Calu3 (cell line): ENCODE measurements at regions of chr18 and their contacts with region 1.

Region 1: GRCh38 chr18:35005963-35006577 is 35.1 kb upstream of the MAPRE2 start:
- DNase-seq: peak; percentile 36
- H3K4me3 Mint-ChIP-seq: no peak overlapping the region
- H3K27ac Mint-ChIP-seq: no peak overlapping the region
- H3K4me1 Mint-ChIP-seq: peaks cover 29% of the 10 kb centered on the region
- H3K27me3 Mint-ChIP-seq: no peaks in the 10 kb centered on the region
- CTCF ChIP-seq: peak; percentile 52

Region 2: GRCh38 chr18:34880882-34881834 is 124.9 kb before region 1 on chr18:
- CTCF ChIA-PET with region 1: no interaction called
- intact Hi-C with region 1: loop called (anchors 1 kb)
- DNase-seq: no peak
- H3K4me3 Mint-ChIP-seq: no peak overlapping the region
- H3K27ac Mint-ChIP-seq: no peak overlapping the region
- H3K4me1 Mint-ChIP-seq: no peaks in the 10 kb centered on the region
- H3K27me3 Mint-ChIP-seq: no peaks in the 10 kb centered on the region
- CTCF ChIP-seq: no peak

Region 3: DNA sequence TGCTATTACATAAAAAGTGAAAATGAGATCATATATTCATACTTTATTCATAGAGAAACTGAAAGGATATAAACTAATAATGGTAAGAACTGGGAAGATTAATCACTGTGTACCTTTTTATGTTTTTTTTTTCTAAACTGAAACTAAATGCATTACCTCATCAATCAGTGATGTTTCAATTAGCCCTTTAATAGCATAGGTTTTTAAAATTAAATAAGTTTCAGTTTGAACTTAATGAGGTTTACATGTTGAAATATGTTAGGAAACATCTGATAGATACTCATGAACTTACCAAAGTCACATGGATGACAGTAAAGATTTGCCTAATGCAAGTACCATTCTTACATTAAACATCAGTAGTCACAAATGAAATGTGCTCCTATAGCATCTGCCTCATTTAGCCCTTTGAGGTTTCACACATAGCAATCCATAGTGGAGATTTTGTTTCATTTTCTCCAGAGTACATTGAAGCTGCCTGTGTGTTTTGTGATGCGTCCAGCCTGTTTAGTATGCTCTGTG is 44.0 kb after region 1 on chr18:
- CTCF ChIA-PET with region 1: no interaction called
- intact Hi-C with region 1: no loop called
- DNase-seq: no peak
- H3K4me3 Mint-ChIP-seq: no peak overlapping the region
- H3K27ac Mint-ChIP-seq: no peak overlapping the region
- H3K4me1 Mint-ChIP-seq: peaks cover 11% of the 10 kb centered on the region
- H3K27me3 Mint-ChIP-seq: no peaks in the 10 kb centered on the region
- CTCF ChIP-seq: no peak

Region 4: GRCh38 chr18:35127201-35127600 is 121.1 kb after region 1 on chr18:
- CTCF ChIA-PET with region 1: interaction called, 6 read pairs
- intact Hi-C with region 1: loop called (anchors 5 kb)
- DNase-seq: peak; percentile 13
- H3K4me3 Mint-ChIP-seq: no peak overlapping the region
- H3K27ac Mint-ChIP-seq: no peak overlapping the region
- H3K4me1 Mint-ChIP-seq: no peaks in the 10 kb centered on the region
- H3K27me3 Mint-ChIP-seq: no peaks in the 10 kb centered on the region
- CTCF ChIP-seq: no peak

Region 5: GRCh38 chr18:35231052-35231451 is 225.0 kb after region 1 on chr18:
- CTCF ChIA-PET with region 1: interaction called, 3 read pairs
- intact Hi-C with region 1: loop called (anchors 5 kb)
- DNase-seq: peak; percentile 81
- H3K4me3 Mint-ChIP-seq: peak overlapping the region; percentile 21
- H3K27ac Mint-ChIP-seq: no peak overlapping the region
- H3K4me1 Mint-ChIP-seq: no peaks in the 10 kb centered on the region
- H3K27me3 Mint-ChIP-seq: no peaks in the 10 kb centered on the region
- CTCF ChIP-seq: peak; percentile 83